IMR-90 (cell line): ENCODE measurements at regions of chr2 and their contacts with region 1.

Region 1: GRCh38 chr2:207258263-207258991 is 92.7 kb upstream of the KLF7 start:
- DNase-seq: peak; percentile 100
- ATAC-seq: peak; percentile 76
- H3K4me3 ChIP-seq: no peak overlapping the region
- H3K27ac ChIP-seq: peak overlapping the region; percentile 99
- H3K4me1 ChIP-seq: peaks cover 56% of the 10 kb centered on the region
- H3K27me3 ChIP-seq: no peaks in the 10 kb centered on the region
- CTCF ChIP-seq: peak; percentile 14; the same call in 1 of the 2 replicates
- POLR2A ChIP-seq: peak; percentile 40
- RAD21 ChIP-seq: peak; percentile 45

Region 2: GRCh38 chr2:207184348-207184747 is 74.1 kb before region 1 on chr2:
- CTCF ChIA-PET with region 1: interaction called, 4 read pairs
- POLR2A ChIA-PET with region 1: no interaction called
- dilution Hi-C with region 1: no loop called
- in situ Hi-C with region 1: no loop called
- intact Hi-C with region 1: loop called (anchors 1 kb)
- DNase-seq: peak; percentile 77
- ATAC-seq: no peak
- H3K4me3 ChIP-seq: no peak overlapping the region
- H3K27ac ChIP-seq: 0 out of 2 replicates have a peak overlapping the region, but pooled peaks have one; percentile 14
- H3K4me1 ChIP-seq: peaks cover 17% of the 10 kb centered on the region
- H3K27me3 ChIP-seq: no peaks in the 10 kb centered on the region
- CTCF ChIP-seq: no peak
- POLR2A ChIP-seq: no peak
- RAD21 ChIP-seq: no peak

Region 3: GRCh38 chr2:207244971-207245925 is 13.2 kb before region 1 on chr2:
- CTCF ChIA-PET with region 1: interaction called, 3 read pairs
- POLR2A ChIA-PET with region 1: interaction called, 11 read pairs
- dilution Hi-C with region 1: no loop called
- in situ Hi-C with region 1: no loop called
- intact Hi-C with region 1: no loop called
- DNase-seq: no peak
- ATAC-seq: no peak
- H3K4me3 ChIP-seq: no peak overlapping the region
- H3K27ac ChIP-seq: no peak overlapping the region
- H3K4me1 ChIP-seq: peaks cover 14% of the 10 kb centered on the region
- H3K27me3 ChIP-seq: no peaks in the 10 kb centered on the region
- CTCF ChIP-seq: no peak
- POLR2A ChIP-seq: no peak
- RAD21 ChIP-seq: no peak

Region 4: DNA sequence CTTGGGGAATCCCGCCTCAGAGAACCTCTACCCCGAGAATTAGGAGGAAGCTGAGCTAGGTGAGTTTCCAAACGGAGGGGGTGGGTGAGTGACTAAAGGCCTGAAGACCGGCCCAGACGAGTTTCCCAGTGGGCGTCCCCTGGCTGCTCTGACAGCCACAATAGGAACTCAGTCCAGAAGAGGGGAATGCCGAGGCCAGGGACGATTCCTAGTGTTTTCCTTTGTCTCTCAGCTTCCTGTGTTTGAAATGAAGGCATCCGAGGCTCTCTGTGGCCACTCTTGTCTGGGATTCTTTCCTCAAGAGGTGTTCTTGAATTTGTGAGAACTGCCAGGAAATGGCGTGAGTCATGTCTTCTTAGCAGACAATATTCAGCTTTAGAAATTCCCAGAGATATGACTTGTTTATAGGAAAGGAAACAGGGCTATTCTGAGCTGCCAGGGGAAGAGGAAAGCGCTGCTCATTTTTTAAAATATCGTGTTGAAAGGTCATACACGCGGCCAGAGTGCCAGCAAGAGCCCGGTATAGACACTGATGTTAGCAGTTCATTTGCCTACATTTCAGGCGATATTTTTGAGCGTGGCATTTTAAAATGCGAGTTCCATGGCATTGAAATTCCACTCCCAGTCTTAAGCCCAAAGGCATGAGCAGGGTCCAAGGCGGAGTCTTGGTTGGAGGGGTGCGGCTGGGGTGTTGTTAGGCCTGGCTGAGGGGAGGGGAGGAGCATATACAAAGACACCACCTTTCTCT is 76.4 kb after region 1 on chr2:
- CTCF ChIA-PET with region 1: interaction called, 3 read pairs
- POLR2A ChIA-PET with region 1: interaction called, 3 read pairs
- dilution Hi-C with region 1: no loop called
- in situ Hi-C with region 1: no loop called
- intact Hi-C with region 1: loop called (anchors 1 kb)
- DNase-seq: peak; percentile 100
- ATAC-seq: peak; percentile 79
- H3K4me3 ChIP-seq: peak overlapping the region; percentile 24
- H3K27ac ChIP-seq: peak overlapping the region; percentile 67
- H3K4me1 ChIP-seq: peaks cover 14% of the 10 kb centered on the region
- H3K27me3 ChIP-seq: no peaks in the 10 kb centered on the region
- CTCF ChIP-seq: no peak
- POLR2A ChIP-seq: peak; percentile 86
- RAD21 ChIP-seq: no peak; the same call in none of the 2 replicates

Region 5: DNA sequence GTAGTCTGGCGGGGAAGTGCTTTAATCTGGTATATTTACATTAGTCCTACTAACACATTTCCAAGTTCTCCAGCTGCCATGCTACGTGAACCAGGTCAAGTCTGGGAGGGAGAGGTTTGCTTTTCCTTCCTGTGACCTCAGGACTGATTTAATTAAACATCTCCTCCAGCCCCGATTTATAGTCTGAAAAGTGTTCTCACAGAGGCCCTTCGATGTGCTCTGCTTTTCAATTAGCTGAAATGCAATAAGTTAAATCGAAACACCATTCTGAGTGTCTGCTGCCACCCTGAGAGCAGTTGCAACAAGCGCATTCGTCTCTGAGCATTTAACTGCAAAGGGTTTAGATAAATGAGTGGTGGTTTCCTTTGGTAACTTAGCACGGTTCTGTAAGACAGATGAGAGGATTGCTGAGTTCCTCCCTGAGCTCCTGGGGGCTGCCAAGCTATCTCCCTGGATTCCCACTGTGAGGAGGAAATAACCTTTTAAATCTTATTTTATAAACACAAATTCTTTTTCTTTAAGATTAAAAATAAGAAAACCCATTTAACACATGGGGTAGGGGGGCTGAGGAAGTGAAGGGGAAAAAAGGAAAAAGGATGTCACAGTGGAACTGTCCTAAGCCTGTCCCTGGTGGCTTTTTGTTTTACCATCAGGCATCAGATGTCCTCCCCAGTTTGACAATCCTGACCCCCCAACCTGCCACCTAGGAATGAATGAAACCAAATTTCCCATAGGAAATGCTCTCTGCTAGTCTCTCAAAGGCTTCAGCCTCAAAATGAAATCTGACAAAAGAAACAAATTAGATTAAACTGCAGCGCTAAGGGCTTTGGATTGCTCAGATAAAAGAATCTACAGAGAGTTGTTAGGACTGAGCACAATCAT is 214.9 kb after region 1 on chr2:
- CTCF ChIA-PET with region 1: interaction called, 7 read pairs
- POLR2A ChIA-PET with region 1: interaction called, 4 read pairs
- dilution Hi-C with region 1: no loop called
- in situ Hi-C with region 1: no loop called
- intact Hi-C with region 1: loop called (anchors 2 kb)
- DNase-seq: peak; percentile 88
- ATAC-seq: peak; percentile 83
- H3K4me3 ChIP-seq: peak overlapping the region; percentile 14; the same call in 1 of the 2 replicates
- H3K27ac ChIP-seq: peak overlapping the region; percentile 62
- H3K4me1 ChIP-seq: peaks cover 7% of the 10 kb centered on the region
- H3K27me3 ChIP-seq: no peaks in the 10 kb centered on the region
- CTCF ChIP-seq: peak; percentile 92
- POLR2A ChIP-seq: no peak
- RAD21 ChIP-seq: peak; percentile 98